B cell (primary cell): ENCODE measurements at regions of chr11 and their contacts with region 1.

Region 1: DNA sequence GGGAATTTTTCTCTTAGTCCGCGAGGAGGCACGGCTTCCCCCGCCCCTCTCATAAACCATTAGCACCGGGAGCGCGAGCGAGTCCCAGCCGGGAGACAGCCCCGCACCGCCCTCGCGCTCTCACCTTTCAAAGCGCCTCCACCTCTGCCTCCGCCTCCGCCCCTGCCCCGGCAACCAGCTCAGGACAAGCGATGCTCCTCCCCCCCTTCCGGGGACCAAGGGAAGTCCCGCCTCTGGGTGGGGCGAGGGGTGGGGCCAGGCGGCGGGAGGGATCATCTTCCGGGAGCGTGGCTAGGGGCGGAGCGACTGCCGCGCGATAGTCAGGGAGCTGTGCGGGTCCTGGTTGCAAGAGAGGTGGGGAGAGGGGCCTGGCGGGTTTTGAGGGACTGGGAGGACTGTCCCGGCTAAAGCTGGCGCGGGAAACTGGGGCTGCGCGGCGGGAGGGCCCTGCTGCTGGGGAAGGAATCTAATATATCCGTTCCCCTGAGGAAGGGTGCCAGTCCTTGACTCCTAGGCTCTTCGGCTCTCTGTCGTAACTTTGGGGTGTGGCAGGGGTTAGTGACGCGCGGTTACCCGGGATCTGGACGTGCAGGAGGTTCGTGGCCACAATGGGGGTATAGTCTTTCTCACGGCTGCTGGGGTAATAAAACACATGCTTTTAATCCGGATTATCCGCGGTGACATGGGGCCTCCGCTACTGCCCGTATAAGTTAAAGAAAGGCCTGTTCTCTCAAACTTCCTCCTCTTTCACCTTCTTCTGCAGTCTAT is at the starts of genes CCDC82 and JRKL:
- DNase-seq: peak; percentile 96
- ATAC-seq: peak; percentile 99
- H3K4me3 ChIP-seq: peak within 1 kb of the TSS; percentile 77 to 89 (median 84)
- H3K4me3 Mint-ChIP-seq: peak within 1 kb of the TSS; percentile 93
- H3K27ac ChIP-seq: peak within 1 kb of the TSS; percentile 82 to 83
- H3K27ac Mint-ChIP-seq: peak within 1 kb of the TSS; percentile 95
- H3K4me1 ChIP-seq: peaks cover 13 to 18% of the 10 kb centered on the region in 2 donors
- H3K4me1 Mint-ChIP-seq: peaks cover 26% of the 10 kb centered on the region
- H3K27me3 ChIP-seq: no peaks in the 10 kb centered on the region
- H3K27me3 Mint-ChIP-seq: no peaks in the 10 kb centered on the region
- CTCF ChIP-seq: no peak
- total RNA-seq, gene CCDC82: 34.1 and 37.9 TPM in 2 replicates
- total RNA-seq, gene JRKL: 12.5 and 12.9 TPM in 2 replicates

Region 2: GRCh38 chr11:94973099-94973968 is 1416.6 kb before region 1 on chr11 and contains the starts of genes CWC15 and KDM4D:
- CTCF ChIA-PET with region 1: interaction called, 7 read pairs
- POLR2A ChIA-PET with region 1: no interaction called
- intact Hi-C with region 1: loop called (anchors 1 kb)
- DNase-seq: peak; percentile 94
- ATAC-seq: peak; percentile 100
- H3K4me3 ChIP-seq: peak within 1 kb of the TSS; percentile 75 to 97 (median 87)
- H3K4me3 Mint-ChIP-seq: peak within 1 kb of the TSS; percentile 92
- H3K27ac ChIP-seq: peak within 1 kb of the TSS; percentile 74 to 83
- H3K27ac Mint-ChIP-seq: peak within 1 kb of the TSS; percentile 94
- H3K4me1 ChIP-seq: peaks cover 10 to 14% of the 10 kb centered on the region in 2 donors
- H3K4me1 Mint-ChIP-seq: peaks cover 13% of the 10 kb centered on the region
- H3K27me3 ChIP-seq: no peaks in the 10 kb centered on the region
- H3K27me3 Mint-ChIP-seq: no peaks in the 10 kb centered on the region
- CTCF ChIP-seq: no peak
- total RNA-seq, gene CWC15: 59.5 and 59.8 TPM in 2 replicates
- total RNA-seq, gene KDM4D: 0.44 and 0.73 TPM in 2 replicates

Region 3: DNA sequence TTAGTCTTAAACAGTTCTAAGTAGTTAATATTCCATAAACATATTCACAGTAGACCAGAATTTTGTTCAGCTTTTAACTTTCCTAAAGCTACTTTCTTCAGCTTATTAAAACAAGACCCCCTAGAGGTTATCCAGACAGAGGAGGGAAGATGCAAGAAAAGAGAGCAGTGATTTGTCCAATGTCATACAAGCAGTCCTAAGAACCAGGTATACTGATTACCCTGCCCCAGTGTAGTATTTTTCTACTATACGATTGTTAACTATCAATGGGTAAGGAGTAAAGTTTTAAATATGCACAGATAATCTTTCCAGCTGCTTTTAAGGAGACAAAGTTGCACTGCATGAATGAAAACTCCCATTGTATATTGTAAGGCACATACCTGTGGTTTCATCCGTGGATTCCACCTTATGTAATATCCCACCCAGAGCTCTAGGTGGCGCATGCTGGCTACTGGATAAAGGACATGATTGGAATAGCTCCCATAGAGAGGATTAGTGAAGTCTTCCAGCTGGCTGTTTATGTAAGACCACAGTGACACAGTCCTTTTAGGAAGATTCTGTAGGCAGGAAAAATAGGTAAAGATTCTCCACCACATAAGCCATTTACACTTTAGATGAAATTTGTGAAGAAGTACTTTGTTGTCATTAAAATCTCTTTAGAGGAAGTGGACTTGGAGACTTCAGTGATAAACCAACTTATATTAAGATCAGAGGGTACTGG is 554.0 kb before region 1 on chr11:
- CTCF ChIA-PET with region 1: interaction called, 97 read pairs
- POLR2A ChIA-PET with region 1: no interaction called
- intact Hi-C with region 1: loop called (anchors 1 kb)
- DNase-seq: peak; percentile 67
- ATAC-seq: peak; percentile 90
- H3K4me3 ChIP-seq: no peak overlapping the region
- H3K4me3 Mint-ChIP-seq: no peak overlapping the region
- H3K27ac ChIP-seq: no peak overlapping the region
- H3K27ac Mint-ChIP-seq: no peak overlapping the region
- H3K4me1 ChIP-seq: no peaks in the 10 kb centered on the region
- H3K4me1 Mint-ChIP-seq: no peaks in the 10 kb centered on the region
- H3K27me3 ChIP-seq: no peaks in the 10 kb centered on the region
- H3K27me3 Mint-ChIP-seq: no peaks in the 10 kb centered on the region
- CTCF ChIP-seq: peak; percentile 92

Region 4: GRCh38 chr11:95923728-95924413 is 466.0 kb before region 1 on chr11 and contains the start of gene MTMR2:
- CTCF ChIA-PET with region 1: interaction called, 3 read pairs
- POLR2A ChIA-PET with region 1: no interaction called
- intact Hi-C with region 1: loop called (anchors 2 kb)
- DNase-seq: peak; percentile 65
- ATAC-seq: peak; percentile 95
- H3K4me3 ChIP-seq: peak within 1 kb of the TSS; percentile 70 to 95 (median 86)
- H3K4me3 Mint-ChIP-seq: peak within 1 kb of the TSS; percentile 98
- H3K27ac ChIP-seq: peak within 1 kb of the TSS; percentile 68 to 83
- H3K27ac Mint-ChIP-seq: peak within 1 kb of the TSS; percentile 97
- H3K4me1 ChIP-seq: peaks cover 9 to 16% of the 10 kb centered on the region in 2 donors
- H3K4me1 Mint-ChIP-seq: peaks cover 25% of the 10 kb centered on the region
- H3K27me3 ChIP-seq: peaks cover 0 to 2% (median 0%) of the 10 kb centered on the region in 4 experiments
- H3K27me3 Mint-ChIP-seq: peaks cover 13% of the 10 kb centered on the region
- CTCF ChIP-seq: no peak
- total RNA-seq, gene MTMR2: 15.4 and 16.1 TPM in 2 replicates

Region 5: GRCh38 chr11:96091476-96091875 is 298.4 kb before region 1 on chr11:
- CTCF ChIA-PET with region 1: interaction called, 28 read pairs
- POLR2A ChIA-PET with region 1: no interaction called
- intact Hi-C with region 1: loop called (anchors 1 kb)
- DNase-seq: peak; percentile 41
- ATAC-seq: peak; percentile 82
- H3K4me3 ChIP-seq: no peak overlapping the region
- H3K4me3 Mint-ChIP-seq: no peak overlapping the region
- H3K27ac ChIP-seq: no peak overlapping the region
- H3K27ac Mint-ChIP-seq: no peak overlapping the region
- H3K4me1 ChIP-seq: no peaks in the 10 kb centered on the region
- H3K4me1 Mint-ChIP-seq: peaks cover 9% of the 10 kb centered on the region
- H3K27me3 ChIP-seq: no peaks in the 10 kb centered on the region
- H3K27me3 Mint-ChIP-seq: no peaks in the 10 kb centered on the region
- CTCF ChIP-seq: peak; percentile 40

Region 6: DNA sequence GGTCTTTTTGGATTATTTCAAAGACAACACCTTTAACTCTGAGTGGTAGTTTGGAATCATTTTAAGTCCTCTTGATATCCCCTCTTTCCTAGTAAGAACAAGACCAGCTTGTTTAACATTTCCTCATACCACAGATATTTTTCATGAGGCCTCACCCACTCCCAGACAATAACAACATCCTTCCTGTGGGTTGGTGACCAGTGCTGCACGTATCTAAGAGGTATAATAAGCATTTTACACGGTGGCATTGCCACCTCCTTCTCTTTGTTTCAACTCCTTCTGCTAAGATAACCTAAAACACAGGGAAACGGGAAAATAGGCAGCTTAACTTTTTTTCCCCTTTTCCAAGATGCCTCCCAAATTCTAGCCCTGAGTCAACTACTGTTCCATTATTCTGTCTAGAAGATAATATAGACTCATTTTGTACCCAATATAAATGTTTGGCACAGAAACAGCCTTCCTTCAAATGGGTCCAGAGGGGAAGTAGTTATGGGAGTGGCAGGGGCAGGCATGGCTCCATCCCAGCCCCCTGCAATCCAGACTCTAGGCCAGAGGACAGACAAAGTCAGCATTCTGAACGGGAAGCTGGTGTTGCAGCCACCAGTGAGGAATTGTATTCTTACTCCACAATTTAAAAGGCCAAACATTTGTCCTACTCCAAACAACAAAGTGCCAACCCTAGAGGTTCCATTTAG is 75.4 kb before region 1 on chr11:
- CTCF ChIA-PET with region 1: no interaction called
- POLR2A ChIA-PET with region 1: no interaction called
- intact Hi-C with region 1: no loop called
- DNase-seq: no peak
- ATAC-seq: no peak
- H3K4me3 ChIP-seq: no peak overlapping the region
- H3K4me3 Mint-ChIP-seq: no peak overlapping the region
- H3K27ac ChIP-seq: peak overlapping the region in 1 of 2 donors; percentile 13
- H3K27ac Mint-ChIP-seq: peak overlapping the region; percentile 74
- H3K4me1 ChIP-seq: peaks cover 11 to 12% of the 10 kb centered on the region in 2 donors
- H3K4me1 Mint-ChIP-seq: peaks cover 43% of the 10 kb centered on the region
- H3K27me3 ChIP-seq: no peaks in the 10 kb centered on the region
- H3K27me3 Mint-ChIP-seq: no peaks in the 10 kb centered on the region
- CTCF ChIP-seq: no peak